AG04449 (cell line): ENCODE measurements at regions of chr14 and their contacts with region 1.

Region 1: DNA sequence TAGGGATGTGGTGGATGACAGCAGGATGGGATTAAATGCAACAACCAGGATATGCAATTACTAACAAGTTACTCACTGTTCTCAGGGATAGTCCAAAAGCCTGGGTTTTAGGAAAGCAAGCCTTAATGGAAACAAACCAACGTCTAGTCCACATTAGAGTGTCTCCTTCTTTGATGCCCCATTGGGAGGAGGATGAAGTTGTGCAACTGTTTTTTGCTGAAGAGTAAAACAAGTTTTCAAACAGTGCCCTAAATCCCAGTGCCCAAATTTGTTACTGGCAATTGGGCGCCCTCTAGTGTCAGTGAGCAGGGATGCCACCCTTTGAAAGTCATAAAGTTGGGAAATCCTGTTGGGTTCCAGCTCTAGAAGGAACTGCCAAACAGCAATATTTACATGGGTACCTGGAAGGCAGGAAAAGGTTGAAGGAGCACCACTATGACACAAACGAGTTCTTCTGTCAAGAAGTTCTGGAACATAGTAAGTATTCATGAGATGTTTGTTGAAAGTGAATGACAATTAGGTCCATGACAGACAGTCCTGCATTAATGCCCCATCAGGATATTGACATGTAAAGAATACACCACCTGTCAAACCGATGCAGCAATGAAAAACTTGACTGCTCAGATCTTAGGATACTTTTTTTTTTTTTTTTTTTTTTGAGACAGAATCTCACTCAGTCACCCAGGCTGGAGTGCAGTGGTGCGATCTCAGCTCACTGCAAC is 11.1 kb upstream of the DPF3 start:
- DNase-seq: no peak
- H3K4me3 ChIP-seq: no peak overlapping the region
- CTCF ChIP-seq: peak; percentile 83

Region 2: GRCh38 chr14:72503696-72504368 is 401.2 kb before region 1 on chr14:
- CTCF ChIA-PET with region 1: interaction called, 14 read pairs
- POLR2A ChIA-PET with region 1: no interaction called
- DNase-seq: no peak
- H3K4me3 ChIP-seq: no peak overlapping the region
- CTCF ChIP-seq: no peak

Region 3: DNA sequence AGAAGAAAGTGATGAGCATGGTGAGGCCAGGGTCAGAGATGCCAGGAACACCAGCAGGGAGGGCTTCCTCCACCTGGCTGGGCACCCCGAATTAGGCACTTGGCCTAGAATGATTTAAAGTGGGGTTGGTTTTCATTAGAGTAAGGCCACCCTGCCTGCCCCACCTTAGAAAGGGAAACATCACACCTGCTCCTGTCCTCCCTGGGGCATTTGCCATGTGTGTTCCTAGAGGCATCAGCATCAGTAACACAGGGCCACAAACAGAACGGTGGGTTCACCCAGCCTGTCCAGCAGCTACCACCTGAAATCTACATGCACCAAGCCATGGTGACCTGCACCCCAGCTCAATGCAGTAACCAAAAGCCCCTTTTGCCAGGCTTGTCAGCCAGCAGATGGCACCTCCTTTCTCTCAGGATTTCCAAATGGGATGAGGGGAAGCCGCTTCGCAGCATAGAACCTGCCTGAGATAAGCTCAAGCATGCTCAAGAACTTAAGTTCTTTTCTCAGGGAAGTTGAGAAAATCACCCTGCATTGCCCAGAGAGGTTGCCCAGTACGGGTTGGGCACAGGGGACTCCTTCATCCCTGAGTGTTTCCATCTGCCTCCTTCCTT is 349.9 kb before region 1 on chr14:
- CTCF ChIA-PET with region 1: interaction called, 12 read pairs
- POLR2A ChIA-PET with region 1: no interaction called
- DNase-seq: no peak
- H3K4me3 ChIP-seq: no peak overlapping the region
- CTCF ChIP-seq: no peak

Region 4: DNA sequence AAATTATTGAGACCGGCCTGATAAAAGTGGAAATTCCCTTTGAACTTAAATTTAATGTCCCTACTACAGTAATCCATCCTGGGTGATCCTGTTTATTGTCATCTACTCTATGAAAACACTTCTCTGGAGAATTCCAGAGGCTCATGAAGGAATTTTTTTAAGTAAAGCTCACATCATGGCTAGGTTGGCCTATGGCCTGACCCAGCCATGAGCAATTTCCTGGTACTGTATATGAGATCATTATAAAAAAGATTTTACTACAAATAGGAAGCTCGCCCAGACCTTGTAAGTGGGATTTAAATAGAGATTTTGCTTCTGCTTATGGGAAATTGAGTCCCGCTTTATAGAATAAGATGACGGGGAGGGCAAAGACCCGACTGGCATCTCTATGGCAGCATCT is 226.6 kb before region 1 on chr14:
- CTCF ChIA-PET with region 1: interaction called, 11 read pairs
- POLR2A ChIA-PET with region 1: no interaction called
- DNase-seq: no peak
- H3K4me3 ChIP-seq: no peak overlapping the region
- CTCF ChIP-seq: no peak

Region 5: DNA sequence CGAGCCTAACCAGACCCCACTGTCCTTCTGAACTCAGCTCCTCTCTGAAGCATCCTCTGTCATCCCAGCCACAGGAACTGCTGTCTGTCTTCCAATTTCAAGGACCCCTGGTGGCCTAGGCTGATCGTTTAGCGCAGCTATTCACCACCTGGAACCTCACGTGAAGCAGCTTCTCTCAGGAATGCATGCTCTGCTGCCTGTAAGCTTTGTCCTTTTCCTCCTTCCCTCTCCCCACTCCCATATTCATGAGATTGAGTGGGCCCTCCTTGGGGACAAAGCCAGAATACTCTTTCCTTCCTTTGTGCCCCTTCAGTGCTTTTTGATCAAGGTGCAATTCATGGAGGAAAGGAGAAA is 28.3 kb before region 1 on chr14:
- CTCF ChIA-PET with region 1: no interaction called
- POLR2A ChIA-PET with region 1: no interaction called
- DNase-seq: no peak
- H3K4me3 ChIP-seq: no peak overlapping the region
- CTCF ChIP-seq: no peak

Region 6: DNA sequence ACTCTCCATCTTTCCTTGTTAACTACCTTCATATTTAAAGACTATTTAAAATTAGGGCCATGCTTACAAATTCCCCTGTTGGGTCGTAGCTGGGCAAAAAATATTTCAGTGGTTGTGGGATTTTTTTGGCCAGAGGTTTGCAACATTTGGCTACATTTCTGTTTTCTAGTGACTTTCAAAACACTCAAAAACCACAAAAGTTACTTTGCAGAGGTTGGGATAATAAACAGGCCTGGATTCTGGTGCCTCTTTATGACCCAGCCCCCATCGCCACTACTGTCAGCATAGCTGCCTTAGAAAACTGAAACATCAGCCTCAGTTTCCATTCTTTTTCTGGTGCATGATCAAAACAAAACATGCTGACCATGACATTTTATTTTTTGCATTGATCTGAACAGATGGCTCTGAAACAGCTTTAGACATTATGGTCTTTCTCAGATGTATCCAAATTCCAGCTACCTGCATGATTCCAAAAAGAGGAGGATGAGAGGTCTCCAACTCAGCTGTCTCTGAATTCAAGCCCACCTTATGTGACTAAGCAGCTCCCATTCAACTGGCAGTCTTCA is 16.3 kb before region 1 on chr14:
- CTCF ChIA-PET with region 1: interaction called, 33 read pairs
- POLR2A ChIA-PET with region 1: interaction called, 3 read pairs
- DNase-seq: no peak
- H3K4me3 ChIP-seq: no peak overlapping the region
- CTCF ChIP-seq: no peak

Region 7: DNA sequence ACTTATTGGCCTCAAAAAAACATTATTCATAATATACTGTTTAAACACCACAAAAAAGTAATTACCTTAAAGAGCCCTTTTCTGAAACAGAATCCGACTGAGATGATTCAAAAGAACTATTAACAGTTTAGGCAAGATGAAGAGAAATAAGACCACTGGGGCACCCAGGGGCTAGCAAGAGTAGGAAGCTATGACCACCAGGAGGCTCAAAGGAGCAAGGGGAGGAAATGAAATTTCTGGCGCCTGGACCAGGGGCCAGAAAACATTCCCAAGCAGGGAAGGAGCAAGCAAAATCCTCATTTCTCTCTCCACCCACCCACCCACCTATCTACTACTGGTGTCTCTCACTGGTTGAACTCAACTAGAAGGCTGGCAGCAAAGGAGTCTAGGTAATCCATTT is 15.0 kb after region 1 on chr14:
- CTCF ChIA-PET with region 1: interaction called, 16 read pairs
- POLR2A ChIA-PET with region 1: interaction called, 3 read pairs
- DNase-seq: no peak
- H3K4me3 ChIP-seq: no peak overlapping the region
- CTCF ChIP-seq: no peak